ENCODE measurements at regions of chr1 and their contacts with region 1.

Region 1: GRCh38 chr1:185559684-185560331 is 174.4 kb upstream of the HMCN1 start:
- DNase-seq: peak; percentile 75
- H3K4me3 Mint-ChIP-seq: peak overlapping the region; percentile 5
- H3K27ac Mint-ChIP-seq: peak overlapping the region; percentile 71
- H3K4me1 Mint-ChIP-seq: peaks cover 51% of the 10 kb centered on the region
- H3K27me3 Mint-ChIP-seq: no peaks in the 10 kb centered on the region

Region 2: GRCh38 chr1:184590163-184590750 is 969.6 kb before region 1 on chr1:
- intact Hi-C with region 1: no loop called
- DNase-seq: no peak
- H3K4me3 Mint-ChIP-seq: no peak overlapping the region
- H3K27ac Mint-ChIP-seq: no peak overlapping the region
- H3K4me1 Mint-ChIP-seq: no peaks in the 10 kb centered on the region
- H3K27me3 Mint-ChIP-seq: no peaks in the 10 kb centered on the region

Region 3: DNA sequence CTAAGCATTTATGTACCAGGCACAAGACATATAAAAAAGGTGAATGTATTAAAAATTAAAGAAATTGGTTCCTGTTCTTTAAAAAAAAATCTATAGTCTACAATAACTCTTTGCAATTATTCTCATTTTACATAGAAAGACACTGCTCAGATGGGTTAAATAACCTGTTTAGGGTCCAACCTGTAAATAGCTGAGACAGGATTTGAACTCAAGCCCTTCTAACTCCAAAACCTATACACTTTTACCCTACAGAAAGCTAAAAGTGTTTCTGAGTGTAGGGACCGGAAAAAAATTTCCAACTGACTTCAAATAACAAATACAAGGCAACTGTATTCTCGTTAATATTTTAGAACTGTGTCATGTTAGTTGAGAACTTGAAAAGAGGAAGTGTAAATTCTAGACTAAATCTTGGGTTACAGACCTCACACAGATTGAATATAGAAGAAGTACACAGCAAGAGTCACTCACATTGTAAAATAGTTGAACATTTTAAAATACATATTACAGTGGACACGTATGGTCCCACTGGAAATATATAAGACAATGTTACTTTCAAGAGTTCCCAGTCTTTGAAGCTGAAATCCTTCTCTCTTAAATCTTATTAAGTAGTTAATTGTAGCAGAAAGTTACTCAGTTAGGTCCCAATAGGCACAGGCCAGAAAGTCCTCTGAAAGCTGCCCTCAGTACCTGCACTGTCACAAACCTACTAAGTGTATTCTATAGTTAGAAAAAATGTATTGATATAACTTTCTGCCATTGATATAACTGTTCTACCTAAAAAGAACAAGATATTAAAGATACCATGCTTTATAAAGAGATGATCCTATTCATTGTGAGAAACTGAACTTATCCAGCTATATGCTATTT is 812.5 kb before region 1 on chr1:
- intact Hi-C with region 1: loop called (anchors 2 kb)
- DNase-seq: no peak
- H3K4me3 Mint-ChIP-seq: no peak overlapping the region
- H3K27ac Mint-ChIP-seq: no peak overlapping the region
- H3K4me1 Mint-ChIP-seq: peaks cover 65% of the 10 kb centered on the region
- H3K27me3 Mint-ChIP-seq: no peaks in the 10 kb centered on the region

Region 4: GRCh38 chr1:185439727-185440415 is 119.9 kb before region 1 on chr1:
- intact Hi-C with region 1: loop called (anchors 1 kb)
- DNase-seq: peak; percentile 44
- H3K4me3 Mint-ChIP-seq: no peak overlapping the region
- H3K27ac Mint-ChIP-seq: no peak overlapping the region
- H3K4me1 Mint-ChIP-seq: peaks cover 19% of the 10 kb centered on the region
- H3K27me3 Mint-ChIP-seq: no peaks in the 10 kb centered on the region

Region 5: GRCh38 chr1:185595835-185596667 is 36.2 kb after region 1 on chr1:
- intact Hi-C with region 1: loop called (anchors 5 kb)
- DNase-seq: peak; percentile 14
- H3K4me3 Mint-ChIP-seq: no peak overlapping the region
- H3K27ac Mint-ChIP-seq: no peak overlapping the region
- H3K4me1 Mint-ChIP-seq: peaks cover 30% of the 10 kb centered on the region
- H3K27me3 Mint-ChIP-seq: no peaks in the 10 kb centered on the region

Region 6: DNA sequence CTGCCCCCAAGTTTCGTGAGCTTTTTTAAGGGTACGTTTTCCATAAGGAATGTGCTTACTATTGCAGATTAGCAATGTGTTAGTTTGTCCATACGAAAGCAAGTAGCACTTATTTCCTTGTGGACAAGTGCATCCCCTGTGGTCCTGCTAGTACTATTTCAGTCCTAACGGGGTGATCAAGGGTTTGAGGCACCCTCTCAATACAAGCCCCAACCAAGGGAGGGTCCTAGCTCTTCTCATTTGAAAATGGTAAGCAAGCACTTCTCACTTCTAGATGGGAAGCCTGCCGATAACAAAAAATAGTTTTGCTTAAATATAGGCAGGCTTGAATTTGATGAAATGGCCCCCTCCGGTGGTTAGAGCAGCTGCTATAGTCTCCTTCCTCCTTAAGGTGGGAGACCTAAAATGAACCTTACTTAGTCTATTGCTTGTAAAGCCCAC is 110.4 kb after region 1 on chr1:
- intact Hi-C with region 1: loop called (anchors 2 kb)
- DNase-seq: no peak
- H3K4me3 Mint-ChIP-seq: no peak overlapping the region
- H3K27ac Mint-ChIP-seq: no peak overlapping the region
- H3K4me1 Mint-ChIP-seq: peaks cover 44% of the 10 kb centered on the region
- H3K27me3 Mint-ChIP-seq: no peaks in the 10 kb centered on the region

Measured in activated T-helper 2 cell treated with anti-CD3 and anti-CD28 coated beads, Interferon-gamma antibody, Interleukin-2, Interleukin-4, amounts not matched to agents 10 μg/mL and 5 μg/mL and 100 μg/mL, durations not matched to agents 14 hours and 24 hours and 36 hours (primary cell).